ENCODE measurements at regions of chr19 and their contacts with region 1.

Region 1: GRCh38 chr19:33416307-33417215 is 43.1 kb downstream of the CEBPG start:
- DNase-seq: no peak
- ATAC-seq: peak; percentile 90
- H3K4me3 ChIP-seq: no peak overlapping the region
- H3K27ac ChIP-seq: no peak overlapping the region
- H3K4me1 ChIP-seq: peaks cover 4% of the 10 kb centered on the region; the same call in 1 of the 2 replicates
- H3K27me3 ChIP-seq: no peaks in the 10 kb centered on the region
- CTCF ChIP-seq: peak; percentile 97

Region 2: GRCh38 chr19:33430674-33431277 is 14.2 kb after region 1 on chr19:
- CTCF ChIA-PET with region 1: interaction called, 13 read pairs
- POLR2A ChIA-PET with region 1: no interaction called
- in situ Hi-C with region 1: no loop called
- intact Hi-C with region 1: no loop called
- DNase-seq: peak; percentile 64
- ATAC-seq: peak; percentile 95
- H3K4me3 ChIP-seq: no peak overlapping the region
- H3K27ac ChIP-seq: no peak overlapping the region
- H3K4me1 ChIP-seq: peaks cover 7% of the 10 kb centered on the region; the same call in 1 of the 2 replicates
- H3K27me3 ChIP-seq: no peaks in the 10 kb centered on the region
- CTCF ChIP-seq: peak; percentile 98

Region 3: DNA sequence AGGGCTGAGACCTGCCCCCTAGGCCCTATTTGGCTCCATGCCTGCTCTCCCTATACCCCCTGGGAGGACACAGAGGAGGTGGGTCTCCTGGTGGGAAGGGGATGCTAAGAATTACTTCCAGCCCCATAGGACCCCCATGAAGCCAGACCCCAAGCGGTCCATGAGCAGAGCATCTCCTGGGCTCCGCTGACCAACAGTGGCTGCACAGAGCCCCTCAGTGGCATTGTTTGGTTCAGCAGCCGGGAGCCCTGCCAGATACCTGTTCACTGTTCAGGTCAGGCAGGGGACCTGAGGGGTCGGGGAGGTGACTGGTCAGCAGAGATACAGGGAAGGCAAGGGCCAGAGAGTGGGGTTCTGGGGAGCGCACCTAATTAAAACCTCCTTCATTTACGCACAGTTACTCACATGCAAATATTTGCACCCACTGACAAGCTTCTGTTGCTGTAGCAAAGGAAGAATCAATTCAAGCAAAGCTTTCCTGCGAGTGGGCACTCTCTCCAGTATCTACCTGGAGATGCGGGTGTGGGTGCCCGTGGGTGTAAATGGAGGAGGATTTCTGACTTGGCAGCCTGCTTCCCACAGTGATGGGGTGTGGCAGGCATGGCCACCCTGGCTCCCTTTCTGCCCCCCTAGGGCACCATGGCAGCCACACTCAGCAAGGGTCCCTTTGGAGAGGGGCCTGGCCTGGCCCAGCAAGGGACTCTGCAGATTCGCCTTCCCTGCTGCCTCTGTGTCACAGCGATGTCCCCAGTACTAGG is 288.7 kb after region 1 on chr19:
- CTCF ChIA-PET with region 1: no interaction called
- POLR2A ChIA-PET with region 1: no interaction called
- in situ Hi-C with region 1: loop called (anchors 10 kb)
- intact Hi-C with region 1: no loop called
- DNase-seq: no peak
- ATAC-seq: no peak
- H3K4me3 ChIP-seq: no peak overlapping the region
- H3K27ac ChIP-seq: no peak overlapping the region
- H3K4me1 ChIP-seq: no peaks in the 10 kb centered on the region
- H3K27me3 ChIP-seq: peaks cover 20% of the 10 kb centered on the region
- CTCF ChIP-seq: no peak

Region 4: DNA sequence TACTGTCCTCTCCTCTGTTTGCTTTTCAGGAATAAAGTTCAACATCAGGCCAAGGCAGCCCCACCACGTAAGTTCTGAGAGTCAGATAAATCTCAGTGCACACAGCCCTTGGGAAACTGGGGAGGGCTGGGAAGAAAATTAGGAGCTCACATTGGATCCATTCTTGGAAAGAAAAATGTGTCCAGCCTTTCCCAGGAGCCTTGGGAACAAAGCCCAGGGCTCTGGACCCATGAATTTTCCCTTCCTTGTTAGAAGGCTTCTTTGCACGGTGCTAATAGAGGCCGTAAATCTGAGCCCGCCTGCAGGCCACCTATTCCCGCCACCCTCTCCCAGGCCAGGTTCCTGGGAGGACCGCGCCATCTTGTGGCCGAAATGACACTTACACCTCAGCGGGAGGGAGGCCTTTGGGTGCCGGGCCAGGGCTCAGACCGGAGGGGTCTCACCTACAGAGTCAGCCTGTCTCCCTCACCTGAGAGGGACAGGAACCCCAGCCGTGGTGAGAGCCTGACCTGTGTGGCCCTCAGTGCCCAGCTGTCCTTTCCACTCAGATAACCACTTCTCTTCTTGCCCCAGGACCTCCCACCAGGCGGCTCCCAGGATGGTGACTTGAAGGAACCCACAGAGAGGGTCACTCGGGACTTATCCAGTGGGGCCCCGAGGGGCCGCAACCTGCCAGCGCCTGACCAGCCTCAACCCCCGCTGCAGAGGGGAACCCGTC is 355.0 kb after region 1 on chr19:
- CTCF ChIA-PET with region 1: interaction called, 13 read pairs
- POLR2A ChIA-PET with region 1: no interaction called
- in situ Hi-C with region 1: no loop called
- intact Hi-C with region 1: loop called (anchors 5 kb)
- DNase-seq: no peak
- ATAC-seq: peak; percentile 89
- H3K4me3 ChIP-seq: no peak overlapping the region
- H3K27ac ChIP-seq: no peak overlapping the region
- H3K4me1 ChIP-seq: no peaks in the 10 kb centered on the region
- H3K27me3 ChIP-seq: peaks cover 11% of the 10 kb centered on the region
- CTCF ChIP-seq: peak; percentile 96